Activated T-helper 1 cell treated with anti-CD3 and anti-CD28 coated beads, Interleukin-12 subunit alpha, Interleukin-12 subunit beta, Interleukin-2, Interleukin-4 antibody, amounts not matched to agents 30 ng/mL and 10 ng/mL and 1 ng/mL, durations not matched to agents 14 hours and 24 hours and 36 hours (primary cell): ENCODE measurements at regions of chr6 and their contacts with region 1.

Region 1: GRCh38 chr6:134529921-134530320 is 212.0 kb upstream of the SGK1 start:
- DNase-seq: no peak
- H3K4me3 Mint-ChIP-seq: no peak overlapping the region
- H3K27ac Mint-ChIP-seq: peak overlapping the region; percentile 33
- H3K4me1 Mint-ChIP-seq: peaks cover 72% of the 10 kb centered on the region
- H3K27me3 Mint-ChIP-seq: no peaks in the 10 kb centered on the region

Region 2: DNA sequence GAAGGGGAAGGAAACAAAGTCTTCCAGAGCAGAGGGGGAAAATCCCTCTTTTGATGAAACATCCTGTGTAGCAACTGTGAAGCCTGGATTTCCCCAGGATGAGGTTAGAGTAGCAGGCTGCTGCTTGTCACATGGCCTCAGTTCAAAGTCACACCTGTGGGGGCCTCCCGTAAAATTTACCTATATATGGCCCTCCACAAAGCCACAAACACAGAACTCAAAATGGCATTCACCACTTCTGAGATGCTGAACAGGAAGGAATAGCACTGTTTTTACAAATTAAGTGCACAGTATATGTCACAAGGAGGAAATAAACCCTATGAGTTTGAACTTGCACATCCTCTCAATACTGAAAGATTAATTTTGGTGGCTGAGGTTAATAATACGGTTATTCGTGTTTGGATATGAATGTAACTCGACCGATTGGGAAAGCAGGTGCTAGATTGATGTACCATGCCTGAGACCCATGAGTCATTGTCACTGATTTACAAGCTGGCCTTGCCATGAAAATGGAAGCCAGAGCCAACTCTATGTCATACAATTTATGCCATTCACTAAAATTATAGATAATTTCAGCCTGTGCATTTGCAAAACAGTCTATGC is 282.6 kb before region 1 on chr6:
- intact Hi-C with region 1: loop called (anchors 1 kb)
- DNase-seq: peak; percentile 82
- H3K4me3 Mint-ChIP-seq: peak overlapping the region; percentile 37
- H3K27ac Mint-ChIP-seq: peak overlapping the region; percentile 91
- H3K4me1 Mint-ChIP-seq: peaks cover 58% of the 10 kb centered on the region
- H3K27me3 Mint-ChIP-seq: no peaks in the 10 kb centered on the region

Region 3: GRCh38 chr6:134425521-134426316 is 104.2 kb before region 1 on chr6:
- intact Hi-C with region 1: no loop called
- DNase-seq: no peak
- H3K4me3 Mint-ChIP-seq: no peak overlapping the region
- H3K27ac Mint-ChIP-seq: no peak overlapping the region
- H3K4me1 Mint-ChIP-seq: peaks cover 36% of the 10 kb centered on the region
- H3K27me3 Mint-ChIP-seq: no peaks in the 10 kb centered on the region

Region 4: GRCh38 chr6:134517145-134517658 is 12.7 kb before region 1 on chr6:
- intact Hi-C with region 1: loop called (anchors 2 kb)
- DNase-seq: no peak
- H3K4me3 Mint-ChIP-seq: no peak overlapping the region
- H3K27ac Mint-ChIP-seq: no peak overlapping the region
- H3K4me1 Mint-ChIP-seq: peaks cover 38% of the 10 kb centered on the region
- H3K27me3 Mint-ChIP-seq: no peaks in the 10 kb centered on the region